ENCODE measurements at regions of chr2 and their contacts with region 1.

Region 1: GRCh38 chr2:86808315-86809161 is 17.8 kb upstream of the CD8A start:
- DNase-seq: peak; percentile 94
- CTCF ChIP-seq: peak; percentile 96

Region 2: GRCh38 chr2:86512034-86512433 is 296.5 kb before region 1 on chr2:
- CTCF ChIA-PET with region 1: no interaction called
- POLR2A ChIA-PET with region 1: no interaction called
- DNase-seq: no peak
- CTCF ChIP-seq: no peak

Region 3: GRCh38 chr2:86623651-86624541 is 184.6 kb before region 1 on chr2 and contains the start of gene RNF103:
- CTCF ChIA-PET with region 1: no interaction called
- POLR2A ChIA-PET with region 1: no interaction called
- DNase-seq: peak; percentile 93
- CTCF ChIP-seq: no peak

Region 4: GRCh38 chr2:86794861-86795260 is 13.7 kb before region 1 on chr2:
- CTCF ChIA-PET with region 1: interaction called, 15 read pairs
- POLR2A ChIA-PET with region 1: no interaction called
- DNase-seq: no peak
- CTCF ChIP-seq: no peak

Region 5: GRCh38 chr2:86818957-86819356 is 10.4 kb after region 1 on chr2:
- CTCF ChIA-PET with region 1: interaction called, 11 read pairs
- POLR2A ChIA-PET with region 1: no interaction called
- DNase-seq: no peak
- CTCF ChIP-seq: no peak

Region 6: GRCh38 chr2:86831537-86831936 is 23.0 kb after region 1 on chr2:
- CTCF ChIA-PET with region 1: no interaction called
- POLR2A ChIA-PET with region 1: no interaction called
- DNase-seq: no peak
- CTCF ChIP-seq: no peak